ENCODE measurements at regions of chr12 and their contacts with region 1.

Region 1: GRCh38 chr12:104358347-104359003 is 54.9 kb downstream of the EID3 start:
- DNase-seq: peak in 4 of 10 donors; percentile 24 to 64 (median 50)

Region 2: GRCh38 chr12:104154286-104154685 is 204.2 kb before region 1 on chr12:
- intact Hi-C with region 1: no loop called
- DNase-seq: no peak

Region 3: GRCh38 chr12:104201238-104202001 is 157.1 kb before region 1 on chr12:
- intact Hi-C with region 1: loop called (anchors 1 kb)
- DNase-seq: peak in 3 of 10 donors; percentile 14 to 36 (median 17)

Region 4: DNA sequence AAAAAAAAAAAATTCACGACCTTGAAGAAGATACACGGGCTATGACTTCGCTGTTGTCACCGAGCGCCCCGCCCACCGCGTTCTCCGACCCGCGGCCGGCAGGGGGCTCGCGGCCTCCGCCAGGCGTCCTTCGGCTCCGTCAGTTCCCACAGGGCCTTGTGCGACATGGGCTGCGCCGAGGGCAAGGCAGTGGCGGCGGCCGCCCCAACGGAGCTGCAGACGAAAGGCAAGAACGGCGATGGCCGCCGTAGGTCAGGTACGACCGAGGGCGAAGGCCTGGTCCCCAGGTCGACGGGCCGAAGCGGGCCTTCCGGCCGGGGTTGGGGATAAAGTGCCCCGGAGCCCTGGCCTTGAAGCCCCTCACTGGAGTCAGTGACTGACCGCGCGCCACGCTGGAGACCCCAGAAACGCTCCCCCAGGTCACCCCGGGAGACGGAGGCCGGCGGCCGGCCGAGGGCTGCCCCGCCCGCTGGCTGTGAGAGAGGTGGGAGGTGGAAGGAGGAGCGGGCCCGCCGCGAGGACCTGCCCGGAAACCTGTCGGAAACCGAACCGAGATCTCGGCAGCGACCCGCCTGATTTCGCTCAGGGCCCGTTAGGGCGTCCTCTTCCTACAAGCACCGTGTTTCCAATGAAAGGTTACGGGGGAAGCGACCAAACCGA is 142.7 kb before region 1 on chr12 and contains the start of gene TXNRD1:
- intact Hi-C with region 1: loop called (anchors 1 kb)
- DNase-seq: peak; percentile 50 to 95 (median 64)

Measured in posterior cingulate gyrus (tissue), 11 donors.